K562 (cell line): ENCODE measurements at regions of chr5 and their contacts with region 1.

Region 1: GRCh38 chr5:160199410-160199911 is 29.8 kb upstream of the FABP6 start:
- DNase-seq: peak; percentile 78 to 89 (median 85)
- ATAC-seq: peak; percentile 94
- H3K4me3 ChIP-seq: no peak overlapping the region
- H3K27ac ChIP-seq: no peak overlapping the region
- H3K4me1 ChIP-seq: peaks cover 27 to 29% of the 10 kb centered on the region in 2 experiments
- H3K27me3 ChIP-seq: no peaks in the 10 kb centered on the region
- CTCF ChIP-seq: peak; percentile 76 to 92 (median 85)
- EP300 ChIP-seq: no peak
- POLR2A ChIP-seq: no peak
- RAD21 ChIP-seq: peak; percentile 92 to 94

Region 2: GRCh38 chr5:160021831-160022446 is 177.5 kb before region 1 on chr5:
- CTCF ChIA-PET with region 1: interaction called, 3 read pairs
- POLR2A ChIA-PET with region 1: no interaction called
- in situ Hi-C with region 1: no loop called
- intact Hi-C with region 1: loop called (anchors 2 kb)
- DNase-seq: peak; percentile 58 to 75 (median 62)
- ATAC-seq: peak; percentile 94
- H3K4me3 ChIP-seq: no peak overlapping the region
- H3K27ac ChIP-seq: no peak overlapping the region
- H3K4me1 ChIP-seq: no peaks in the 10 kb centered on the region
- H3K27me3 ChIP-seq: no peaks in the 10 kb centered on the region
- CTCF ChIP-seq: peak; percentile 72 to 85 (median 76)
- EP300 ChIP-seq: no peak
- POLR2A ChIP-seq: no peak
- RAD21 ChIP-seq: peak; percentile 78 to 83

Region 3: GRCh38 chr5:160082614-160083500 is 116.6 kb before region 1 on chr5:
- CTCF ChIA-PET with region 1: no interaction called
- POLR2A ChIA-PET with region 1: interaction called, 3 read pairs
- in situ Hi-C with region 1: no loop called
- intact Hi-C with region 1: loop called (anchors 2 kb)
- DNase-seq: no peak
- ATAC-seq: no peak
- H3K4me3 ChIP-seq: no peak overlapping the region
- H3K27ac ChIP-seq: no peak overlapping the region
- H3K4me1 ChIP-seq: peaks cover 0 to 13% of the 10 kb centered on the region in 2 experiments; a peak in 3 of 5 replicates
- H3K27me3 ChIP-seq: no peaks in the 10 kb centered on the region
- CTCF ChIP-seq: no peak
- EP300 ChIP-seq: no peak
- POLR2A ChIP-seq: no peak
- RAD21 ChIP-seq: no peak

Region 4: DNA sequence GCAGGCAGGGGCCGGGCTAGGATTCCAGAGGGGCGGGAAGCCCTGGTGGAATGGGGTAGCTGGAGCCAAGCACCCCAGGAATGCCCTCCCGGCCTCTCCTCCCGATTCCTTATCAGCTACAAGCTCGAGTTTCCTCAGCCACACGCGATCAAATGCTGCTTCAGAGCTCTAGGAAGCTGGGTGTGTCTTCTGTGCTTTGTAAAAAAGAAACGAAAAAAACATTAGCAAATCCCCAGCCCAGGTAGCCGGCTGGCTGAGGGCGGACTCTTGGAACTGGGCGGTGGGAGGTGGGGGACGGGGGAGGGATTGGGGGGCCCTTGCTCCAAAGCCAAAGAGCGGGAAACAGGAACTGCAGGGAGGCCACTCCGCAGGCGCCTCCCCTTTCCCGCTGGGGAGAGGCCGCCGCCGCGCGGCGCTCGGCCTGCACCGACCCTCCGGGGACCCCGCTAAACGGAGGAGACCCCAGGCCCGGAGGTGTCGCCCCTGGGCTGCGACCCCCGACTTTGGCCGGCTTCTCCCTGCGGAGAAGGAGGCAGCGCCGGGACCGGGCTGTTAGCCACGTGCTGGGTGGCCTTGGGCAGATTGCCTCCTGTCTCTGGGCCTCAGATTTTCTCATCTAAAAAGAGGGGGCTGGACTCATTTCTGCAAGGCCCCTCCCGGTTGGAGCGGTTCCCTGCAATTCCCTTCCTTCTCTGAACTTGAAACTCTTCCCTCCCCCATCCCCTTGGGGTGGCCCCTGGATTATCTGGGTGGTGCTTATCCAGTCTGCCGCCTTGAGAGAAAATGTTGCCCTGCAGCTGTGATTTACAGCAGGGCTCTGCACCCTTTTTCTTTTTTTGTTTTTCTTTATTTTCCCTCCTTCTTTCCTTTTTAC is 11.1 kb before region 1 on chr5:
- CTCF ChIA-PET with region 1: no interaction called
- POLR2A ChIA-PET with region 1: interaction called, 13 read pairs
- in situ Hi-C with region 1: no loop called
- intact Hi-C with region 1: no loop called
- DNase-seq: peak; percentile 68 to 69 (median 69)
- ATAC-seq: peak; percentile 89
- H3K4me3 ChIP-seq: peak overlapping the region; percentile 38
- H3K27ac ChIP-seq: peak overlapping the region; percentile 38; the same call in 1 of the 3 replicates
- H3K4me1 ChIP-seq: peaks cover 0 to 13% of the 10 kb centered on the region in 2 experiments; a peak in 3 of 5 replicates
- H3K27me3 ChIP-seq: no peaks in the 10 kb centered on the region
- CTCF ChIP-seq: 0 out of 6 replicates have a peak, but pooled peaks of 1 of the 3 experiments have one; percentile 8
- EP300 ChIP-seq: no peak
- POLR2A ChIP-seq: no peak
- RAD21 ChIP-seq: peak in 1 of 2 experiments; percentile 5; a peak in 1 of 4 replicates

Region 5: DNA sequence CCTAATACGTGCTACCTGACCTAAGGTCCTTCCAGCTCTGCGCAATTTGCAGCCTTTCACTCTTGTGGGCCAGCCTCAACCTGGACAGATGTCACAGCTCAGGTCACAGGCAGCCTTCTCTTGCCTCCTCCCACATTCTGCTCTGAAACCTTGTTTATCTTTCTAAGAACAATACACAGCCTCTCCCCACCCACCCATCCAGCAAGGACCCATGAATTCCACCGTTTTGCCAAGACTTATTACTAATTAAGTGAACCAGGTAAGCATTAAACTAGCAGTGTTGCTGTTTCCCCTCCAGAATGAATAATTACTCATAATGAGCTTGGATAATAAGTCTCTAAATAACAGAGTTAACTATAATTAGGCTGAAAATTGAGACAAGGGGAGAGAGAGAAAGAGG is 40.9 kb after region 1 on chr5:
- CTCF ChIA-PET with region 1: no interaction called
- POLR2A ChIA-PET with region 1: no interaction called
- in situ Hi-C with region 1: no loop called
- intact Hi-C with region 1: loop called (anchors 5 kb)
- DNase-seq: peak in 2 of 4 experiments; percentile 45 to 69
- ATAC-seq: peak; percentile 67
- H3K4me3 ChIP-seq: no peak overlapping the region
- H3K27ac ChIP-seq: no peak overlapping the region
- H3K4me1 ChIP-seq: peaks cover 17 to 22% of the 10 kb centered on the region in 2 experiments
- H3K27me3 ChIP-seq: peaks cover 0 to under 1% of the 10 kb centered on the region in 2 experiments; a peak in 1 of 5 replicates
- CTCF ChIP-seq: no peak
- EP300 ChIP-seq: no peak
- POLR2A ChIP-seq: no peak
- RAD21 ChIP-seq: no peak

Region 6: GRCh38 chr5:160268121-160268520 is 68.7 kb after region 1 on chr5:
- CTCF ChIA-PET with region 1: no interaction called
- POLR2A ChIA-PET with region 1: no interaction called
- in situ Hi-C with region 1: no loop called
- intact Hi-C with region 1: no loop called
- DNase-seq: no peak
- ATAC-seq: no peak
- H3K4me3 ChIP-seq: no peak overlapping the region
- H3K27ac ChIP-seq: no peak overlapping the region
- H3K4me1 ChIP-seq: peaks cover 2 to 4% of the 10 kb centered on the region in 2 experiments
- H3K27me3 ChIP-seq: no peaks in the 10 kb centered on the region
- CTCF ChIP-seq: no peak
- EP300 ChIP-seq: no peak
- POLR2A ChIP-seq: no peak
- RAD21 ChIP-seq: no peak

Region 7: DNA sequence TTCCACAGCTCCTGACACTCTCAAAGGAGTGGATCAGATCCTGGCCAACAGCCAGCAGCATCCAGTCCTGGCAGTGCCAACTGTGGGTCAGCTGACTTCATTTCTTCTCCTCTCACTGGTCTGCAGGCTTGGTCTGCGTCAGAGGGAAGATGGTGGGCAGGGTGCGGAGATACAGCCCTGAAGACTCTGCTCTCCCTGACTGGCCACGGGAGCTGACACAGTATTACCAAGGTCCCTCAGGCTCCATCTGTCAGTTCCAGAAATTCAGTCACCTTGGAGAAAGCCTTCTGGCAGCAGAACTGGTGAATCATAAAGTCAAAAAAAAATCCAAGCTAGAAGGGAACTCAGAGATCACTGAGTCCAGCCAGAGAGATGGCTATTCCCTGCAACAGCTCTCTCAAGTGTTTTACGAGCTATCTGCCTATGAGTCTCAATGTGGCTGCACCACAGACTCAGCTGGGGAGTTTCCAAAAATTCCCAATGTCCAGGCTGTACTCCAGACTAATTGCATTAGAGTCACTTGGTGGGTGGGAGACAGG is 143.0 kb after region 1 on chr5:
- CTCF ChIA-PET with region 1: interaction called, 33 read pairs
- POLR2A ChIA-PET with region 1: interaction called, 3 read pairs
- in situ Hi-C with region 1: loop called (anchors 5 kb)
- intact Hi-C with region 1: loop called (anchors 1 kb)
- DNase-seq: no peak
- ATAC-seq: no peak
- H3K4me3 ChIP-seq: no peak overlapping the region
- H3K27ac ChIP-seq: no peak overlapping the region
- H3K4me1 ChIP-seq: peaks cover 4 to 7% of the 10 kb centered on the region in 2 experiments; a peak in 4 of 5 replicates
- H3K27me3 ChIP-seq: peaks cover 0 to 12% of the 10 kb centered on the region in 2 experiments; a peak in 2 of 5 replicates
- CTCF ChIP-seq: no peak
- EP300 ChIP-seq: no peak
- POLR2A ChIP-seq: no peak
- RAD21 ChIP-seq: no peak

Region 8: DNA sequence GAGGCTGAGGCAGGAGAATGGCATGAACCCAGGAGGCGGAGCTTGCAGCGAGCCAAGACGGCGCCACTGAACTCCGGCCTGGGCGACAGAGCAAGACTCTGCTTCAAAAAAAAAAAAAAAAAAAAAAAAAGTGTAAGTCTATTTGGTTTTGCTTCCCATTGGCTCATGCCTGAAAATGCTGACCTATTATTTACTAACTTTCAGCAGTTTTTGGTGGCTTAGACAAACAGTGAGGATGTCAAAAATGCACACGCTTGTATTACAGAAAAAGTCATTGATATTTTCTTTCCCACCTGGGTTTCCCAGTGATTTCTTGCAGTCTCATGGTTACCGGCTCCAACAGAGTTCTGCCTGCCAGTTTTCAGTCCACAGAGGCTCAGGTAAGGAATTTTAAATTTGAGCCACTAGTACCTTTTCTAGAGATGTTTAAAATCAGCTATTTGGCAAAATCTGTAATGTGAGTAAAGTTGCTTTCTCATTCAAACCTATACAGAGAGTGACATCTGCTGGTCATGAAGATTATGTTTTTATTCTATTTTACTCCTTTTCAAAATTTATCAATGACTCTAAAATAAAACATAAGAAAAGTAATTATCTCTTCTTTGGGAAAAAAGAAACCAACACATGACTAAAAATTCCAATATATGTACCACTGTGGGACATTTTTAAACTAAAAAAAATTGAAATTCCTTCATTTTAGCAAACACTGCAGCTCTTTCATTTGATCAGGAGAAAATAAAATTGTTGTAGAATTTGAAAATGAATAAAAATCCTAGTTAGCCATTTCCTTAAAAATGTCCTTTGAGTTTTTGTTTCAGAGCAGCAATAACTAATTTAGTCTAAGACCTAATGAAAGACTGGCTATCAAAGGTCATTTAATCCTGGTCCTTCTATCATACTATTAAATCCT is 191.6 kb after region 1 on chr5:
- CTCF ChIA-PET with region 1: interaction called, 15 read pairs
- POLR2A ChIA-PET with region 1: no interaction called
- in situ Hi-C with region 1: no loop called
- intact Hi-C with region 1: loop called (anchors 1 kb)
- DNase-seq: peak in 1 of 4 experiments; percentile 34
- ATAC-seq: peak; percentile 72
- H3K4me3 ChIP-seq: no peak overlapping the region
- H3K27ac ChIP-seq: no peak overlapping the region
- H3K4me1 ChIP-seq: no peaks in the 10 kb centered on the region
- H3K27me3 ChIP-seq: no peaks in the 10 kb centered on the region
- CTCF ChIP-seq: peak in 2 of 3 experiments; percentile 32 to 69; a peak in 3 of 6 replicates
- EP300 ChIP-seq: no peak
- POLR2A ChIP-seq: no peak
- RAD21 ChIP-seq: peak; percentile 74 to 81

Region 9: GRCh38 chr5:160627921-160628618 is 428.6 kb after region 1 on chr5:
- CTCF ChIA-PET with region 1: no interaction called
- POLR2A ChIA-PET with region 1: no interaction called
- in situ Hi-C with region 1: no loop called
- intact Hi-C with region 1: no loop called
- DNase-seq: no peak
- ATAC-seq: no peak
- H3K4me3 ChIP-seq: no peak overlapping the region
- H3K27ac ChIP-seq: no peak overlapping the region
- H3K4me1 ChIP-seq: no peaks in the 10 kb centered on the region
- H3K27me3 ChIP-seq: no peaks in the 10 kb centered on the region
- CTCF ChIP-seq: no peak
- EP300 ChIP-seq: no peak
- POLR2A ChIP-seq: no peak
- RAD21 ChIP-seq: no peak